Activated CD8-positive, alpha-beta memory T cell treated with anti-CD3 and anti-CD28 coated beads, Interleukin-2, amount 10 ng/mL, durations not matched to agents 7 days and 5 days (primary cell): ENCODE measurements at regions of chr6 and their contacts with region 1.

Region 1: GRCh38 chr6:211871-212497 is 80.3 kb upstream of the DUSP22 start:
- DNase-seq: no peak
- ATAC-seq: no peak
- H3K4me3 Mint-ChIP-seq: no peak overlapping the region
- H3K27ac Mint-ChIP-seq: no peak overlapping the region
- H3K4me1 Mint-ChIP-seq: peaks cover 59% of the 10 kb centered on the region
- H3K27me3 Mint-ChIP-seq: peaks cover 11% of the 10 kb centered on the region

Region 2: GRCh38 chr6:195861-196360 is 16.1 kb before region 1 on chr6:
- CTCF ChIA-PET with region 1: interaction called, 29 read pairs
- DNase-seq: peak; percentile 60
- ATAC-seq: peak; percentile 27
- H3K4me3 Mint-ChIP-seq: no peak overlapping the region
- H3K27ac Mint-ChIP-seq: peak overlapping the region; percentile 7
- H3K4me1 Mint-ChIP-seq: peaks cover 49% of the 10 kb centered on the region
- H3K27me3 Mint-ChIP-seq: no peaks in the 10 kb centered on the region

Region 3: GRCh38 chr6:268394-268935 is 56.5 kb after region 1 on chr6:
- CTCF ChIA-PET with region 1: no interaction called
- DNase-seq: no peak
- ATAC-seq: no peak
- H3K4me3 Mint-ChIP-seq: no peak overlapping the region
- H3K27ac Mint-ChIP-seq: no peak overlapping the region
- H3K4me1 Mint-ChIP-seq: peaks cover 12% of the 10 kb centered on the region
- H3K27me3 Mint-ChIP-seq: peaks cover 2% of the 10 kb centered on the region

Region 4: DNA sequence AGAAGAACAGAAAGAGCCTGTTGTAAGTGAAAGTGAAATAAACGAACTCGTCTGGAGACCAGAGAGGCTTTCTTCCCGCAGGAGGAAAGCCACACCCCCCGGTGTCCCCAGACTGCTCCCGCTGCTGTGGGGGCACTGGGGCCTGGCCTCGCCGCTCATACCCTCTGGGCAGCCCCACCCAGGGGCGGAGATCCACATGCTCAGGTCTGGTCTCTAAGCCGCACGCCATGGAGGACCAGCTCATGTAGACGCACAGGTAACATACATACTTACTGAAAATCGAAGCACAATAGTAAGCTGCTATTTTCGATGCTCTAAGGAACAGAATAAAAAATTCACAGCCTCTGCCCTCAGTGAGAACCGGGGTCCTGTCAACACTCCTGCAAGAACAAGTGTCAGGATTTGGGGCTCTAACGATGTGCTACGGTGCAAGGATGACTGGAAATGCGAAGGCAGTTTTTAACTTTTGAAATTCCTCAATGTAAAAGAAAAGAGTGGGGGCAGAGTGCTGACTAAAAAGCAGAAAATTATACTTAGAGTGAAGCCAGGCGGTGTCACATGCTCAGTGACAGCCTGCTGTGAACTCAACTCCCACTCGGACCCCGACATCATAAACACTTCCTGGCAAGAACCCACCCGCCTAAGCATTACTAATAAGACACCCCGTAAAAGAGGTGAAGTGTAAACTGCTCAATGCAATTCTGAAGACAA is 290.1 kb after region 1 on chr6:
- CTCF ChIA-PET with region 1: no interaction called
- DNase-seq: peak; percentile 85
- ATAC-seq: peak; percentile 64
- H3K4me3 Mint-ChIP-seq: peak overlapping the region; percentile 81
- H3K27ac Mint-ChIP-seq: peak overlapping the region; percentile 94
- H3K4me1 Mint-ChIP-seq: peaks cover 76% of the 10 kb centered on the region
- H3K27me3 Mint-ChIP-seq: no peaks in the 10 kb centered on the region

Region 5: GRCh38 chr6:934686-935085 is 722.7 kb after region 1 on chr6:
- CTCF ChIA-PET with region 1: no interaction called
- DNase-seq: peak; percentile 21
- ATAC-seq: no peak
- H3K4me3 Mint-ChIP-seq: no peak overlapping the region
- H3K27ac Mint-ChIP-seq: no peak overlapping the region
- H3K4me1 Mint-ChIP-seq: no peaks in the 10 kb centered on the region
- H3K27me3 Mint-ChIP-seq: no peaks in the 10 kb centered on the region